ENCODE measurements at regions of chr11 and their contacts with region 1.

Region 1: DNA sequence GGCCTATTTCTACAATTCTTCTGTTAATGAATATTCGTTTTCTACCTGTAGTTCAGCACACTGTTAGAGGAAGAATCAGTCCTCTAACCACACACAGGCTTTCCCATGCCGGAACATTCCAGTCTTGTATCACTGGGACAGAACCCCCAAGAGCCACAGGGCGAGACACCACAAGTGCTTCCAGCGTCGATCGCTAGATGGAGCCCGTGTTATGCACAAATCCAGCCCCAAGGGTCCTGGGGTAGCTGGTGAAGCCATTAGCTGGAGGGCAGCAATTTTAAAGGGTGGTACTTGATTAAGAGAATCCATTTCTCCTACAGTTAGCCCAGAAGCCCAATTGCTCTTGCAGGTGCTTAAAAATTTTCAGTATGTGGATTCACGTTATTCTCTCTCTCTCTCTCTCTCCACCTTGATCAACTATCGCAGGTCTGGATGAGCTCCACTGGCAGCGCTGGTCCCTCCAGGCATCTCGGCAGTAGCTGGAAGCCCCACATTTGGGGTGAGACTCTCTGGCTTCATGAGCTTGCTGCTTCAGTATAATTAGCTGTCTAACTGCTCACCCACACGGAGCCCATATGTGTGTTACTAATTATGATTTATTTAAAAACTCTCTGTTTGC is 148.2 kb upstream of the SNX19 start:
- DNase-seq: peak; percentile 23
- H3K4me3 ChIP-seq: no peak overlapping the region
- H3K27ac ChIP-seq: no peak overlapping the region
- H3K4me1 ChIP-seq: no peaks in the 10 kb centered on the region
- H3K27me3 ChIP-seq: no peaks in the 10 kb centered on the region
- CTCF ChIP-seq: peak; percentile 54 to 63
- POLR2A ChIP-seq: no peak

Region 2: GRCh38 chr11:130924770-130925169 is 139.7 kb before region 1 on chr11:
- CTCF ChIA-PET with region 1: no interaction called
- POLR2A ChIA-PET with region 1: no interaction called
- dilution Hi-C with region 1: no loop called
- intact Hi-C with region 1: loop called (anchors 5 kb)
- DNase-seq: no peak
- H3K4me3 ChIP-seq: no peak overlapping the region
- H3K27ac ChIP-seq: no peak overlapping the region
- H3K4me1 ChIP-seq: no peaks in the 10 kb centered on the region
- H3K27me3 ChIP-seq: peaks cover 2 to 11% of the 10 kb centered on the region in 2 experiments
- CTCF ChIP-seq: no peak
- POLR2A ChIP-seq: no peak

Region 3: GRCh38 chr11:130999997-131000770 is 64.3 kb before region 1 on chr11:
- CTCF ChIA-PET with region 1: no interaction called
- POLR2A ChIA-PET with region 1: no interaction called
- dilution Hi-C with region 1: no loop called
- intact Hi-C with region 1: no loop called
- DNase-seq: peak; percentile 80
- H3K4me3 ChIP-seq: peak overlapping the region in 1 of 3 experiments; percentile 21
- H3K27ac ChIP-seq: peak overlapping the region; percentile 69
- H3K4me1 ChIP-seq: peaks cover 24% of the 10 kb centered on the region
- H3K27me3 ChIP-seq: no peaks in the 10 kb centered on the region
- CTCF ChIP-seq: no peak
- POLR2A ChIP-seq: no peak

Region 4: DNA sequence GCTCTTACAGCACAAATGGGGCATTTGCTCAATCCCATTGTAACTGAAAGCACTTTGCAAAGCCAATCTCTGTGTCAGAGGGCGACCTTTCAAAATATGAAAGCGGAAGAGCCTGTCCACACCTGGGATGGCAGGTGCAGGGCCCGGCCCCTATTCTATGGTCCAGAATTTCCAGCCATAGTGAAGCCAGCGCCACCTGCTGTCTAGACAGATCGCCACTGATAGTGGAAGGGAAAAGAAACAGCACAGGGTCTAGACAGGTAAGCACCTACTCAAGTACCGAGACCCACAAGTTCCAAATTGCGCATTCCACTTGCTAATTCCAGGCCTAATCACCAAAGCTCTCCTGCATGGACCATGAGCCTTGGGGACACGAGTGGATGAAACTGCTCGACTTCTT is 447.3 kb after region 1 on chr11:
- CTCF ChIA-PET with region 1: no interaction called
- POLR2A ChIA-PET with region 1: no interaction called
- dilution Hi-C with region 1: no loop called
- intact Hi-C with region 1: loop called (anchors 10 kb)
- DNase-seq: no peak
- H3K4me3 ChIP-seq: no peak overlapping the region
- H3K27ac ChIP-seq: no peak overlapping the region
- H3K4me1 ChIP-seq: no peaks in the 10 kb centered on the region
- H3K27me3 ChIP-seq: no peaks in the 10 kb centered on the region
- CTCF ChIP-seq: no peak
- POLR2A ChIP-seq: no peak